ENCODE measurements at regions of chr17 and their contacts with region 1.

Region 1: GRCh38 chr17:50956750-50957523 is 90.8 kb upstream of the TOB1 start:
- DNase-seq: peak; percentile 70
- ATAC-seq: peak; percentile 83
- H3K4me3 ChIP-seq: no peak overlapping the region
- H3K27ac ChIP-seq: no peak overlapping the region
- H3K4me1 ChIP-seq: peaks cover 43% of the 10 kb centered on the region
- H3K27me3 ChIP-seq: no peaks in the 10 kb centered on the region
- CTCF ChIP-seq: peak; percentile 96
- EP300 ChIP-seq: no peak
- POLR2A ChIP-seq: peak in 1 of 2 experiments; percentile 11; a peak in 1 of 4 replicates
- RAD21 ChIP-seq: peak; percentile 93

Region 2: GRCh38 chr17:50783193-50783660 is 173.7 kb before region 1 on chr17:
- CTCF ChIA-PET with region 1: interaction called, 20 read pairs
- POLR2A ChIA-PET with region 1: interaction called, 4 read pairs
- in situ Hi-C with region 1: loop called (anchors 5 kb)
- intact Hi-C with region 1: loop called (anchors 1 kb)
- DNase-seq: peak; percentile 86
- ATAC-seq: peak; percentile 97
- H3K4me3 ChIP-seq: no peak overlapping the region
- H3K27ac ChIP-seq: no peak overlapping the region
- H3K4me1 ChIP-seq: peaks cover 23% of the 10 kb centered on the region
- H3K27me3 ChIP-seq: peaks cover 0 to 2% of the 10 kb centered on the region in 2 experiments; a peak in 1 of 5 replicates
- CTCF ChIP-seq: peak; percentile 99
- EP300 ChIP-seq: peak; percentile 16 to 45; a peak in 1 of 4 replicates
- POLR2A ChIP-seq: no peak
- RAD21 ChIP-seq: peak; percentile 99

Region 3: DNA sequence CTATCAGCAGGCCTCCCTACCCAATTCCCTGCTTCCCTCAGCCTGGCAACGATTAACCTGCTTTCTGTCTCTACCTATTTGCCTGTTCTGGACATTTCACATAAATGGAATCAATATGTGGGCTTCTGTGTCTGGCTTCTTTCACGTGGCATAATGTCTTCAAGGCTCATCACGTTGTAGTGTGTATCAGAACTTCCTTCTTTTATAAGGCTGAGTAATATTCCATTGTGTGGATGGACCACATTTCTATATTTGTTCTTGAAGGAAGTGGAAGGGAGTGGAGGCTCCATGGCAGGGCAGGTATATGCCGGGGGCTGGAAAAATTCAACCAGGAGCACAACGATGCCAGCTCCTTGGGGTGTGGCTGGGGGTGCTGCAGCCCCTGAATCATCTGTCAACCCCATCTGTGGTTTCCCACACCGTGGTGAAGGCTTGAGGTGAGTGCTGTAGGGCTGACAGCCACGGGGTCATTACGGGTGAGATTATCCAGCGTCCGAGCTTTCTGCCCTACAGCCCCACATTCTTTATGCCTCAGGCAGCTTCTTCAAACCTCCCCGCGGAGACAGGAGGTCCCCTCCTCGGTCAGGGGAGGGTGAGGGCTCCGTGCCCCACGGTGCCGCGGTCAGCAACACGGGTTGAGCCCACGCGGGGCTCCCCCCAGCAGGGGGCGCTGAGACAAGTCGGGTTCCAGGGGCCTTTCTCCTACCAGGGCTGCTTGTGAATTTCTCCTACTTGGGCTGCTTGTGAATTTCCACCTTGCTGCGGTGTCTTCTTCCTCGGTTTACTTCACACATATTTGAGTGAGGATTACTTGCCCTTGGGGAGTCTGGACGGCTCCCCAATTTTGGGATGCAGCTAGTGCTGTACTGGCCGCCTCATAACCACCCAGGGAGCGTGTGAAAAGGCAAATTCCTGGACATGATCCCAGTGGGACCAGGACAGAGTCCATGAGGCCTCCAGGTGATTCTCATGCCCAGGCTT is 139.9 kb before region 1 on chr17:
- CTCF ChIA-PET with region 1: interaction called, 10 read pairs
- POLR2A ChIA-PET with region 1: no interaction called
- in situ Hi-C with region 1: no loop called
- intact Hi-C with region 1: no loop called
- DNase-seq: no peak
- ATAC-seq: peak; percentile 78
- H3K4me3 ChIP-seq: peak overlapping the region in 1 of 3 experiments; percentile 50; a peak in 2 of 6 replicates
- H3K27ac ChIP-seq: no peak overlapping the region
- H3K4me1 ChIP-seq: peaks cover 27% of the 10 kb centered on the region
- H3K27me3 ChIP-seq: peaks cover 0 to 33% of the 10 kb centered on the region in 2 experiments; a peak in 4 of 5 replicates
- CTCF ChIP-seq: peak; percentile 92
- EP300 ChIP-seq: no peak
- POLR2A ChIP-seq: no peak
- RAD21 ChIP-seq: peak; percentile 71

Measured in HepG2 (cell line).